Naive thymus-derived CD4-positive, alpha-beta T cell (primary cell): ENCODE measurements at regions of chr3 and their contacts with region 1.

Region 1: DNA sequence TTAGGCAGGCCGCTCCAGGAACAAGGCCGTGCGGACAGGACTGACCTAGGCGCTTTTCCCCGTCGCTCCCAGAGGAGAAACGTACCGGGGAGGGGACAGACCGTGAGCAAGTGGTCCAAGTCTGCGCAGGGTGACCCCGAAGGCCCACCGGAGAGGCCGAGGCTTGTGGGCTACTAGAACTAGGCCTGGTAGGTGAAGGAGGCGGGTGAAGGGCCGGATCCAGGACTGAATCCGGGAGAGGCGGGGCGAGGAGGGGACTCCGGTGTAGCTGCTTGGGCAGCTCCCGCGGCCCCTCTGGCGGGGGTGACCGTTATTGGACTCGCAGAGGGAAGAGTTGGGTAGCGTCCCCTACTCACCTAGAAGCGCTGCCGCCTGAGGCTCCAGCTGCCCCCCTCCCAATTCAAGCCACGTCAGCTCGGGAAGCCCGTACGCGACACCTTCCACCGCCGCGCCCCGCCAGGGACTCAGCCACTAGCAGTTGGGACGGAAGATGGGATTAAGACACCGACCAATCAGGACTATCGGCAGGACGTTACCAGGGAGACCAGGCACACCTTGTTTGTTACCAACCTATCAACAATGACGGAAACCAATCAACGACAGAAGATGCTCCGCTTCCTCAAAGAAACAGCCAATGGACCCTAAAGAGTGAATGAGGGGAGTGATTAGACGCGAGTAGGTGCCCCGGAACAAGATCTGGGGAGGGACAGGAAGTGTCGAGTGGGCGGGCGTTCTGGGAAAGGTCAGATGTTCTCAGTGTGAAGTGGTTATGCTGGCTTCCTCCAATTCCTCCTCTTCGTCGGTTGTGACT is at the start of gene GOLGB1:
- DNase-seq: peak; percentile 79 to 98 (median 96)
- ATAC-seq: peak; percentile 96
- H3K4me3 ChIP-seq: peak within 1 kb of the TSS; percentile 78
- H3K4me3 Mint-ChIP-seq: peak within 1 kb of the TSS in 3 of 10 donors; percentile 5 to 58 (median 39)
- H3K27ac ChIP-seq: peak within 1 kb of the TSS; percentile 96
- H3K27ac Mint-ChIP-seq: peak within 1 kb of the TSS in 2 of 9 donors; percentile 19 to 36
- H3K4me1 ChIP-seq: peaks cover 4 to 11% of the 10 kb centered on the region in 2 donors
- H3K4me1 Mint-ChIP-seq: peaks cover 5 to 18% (median 10%) of the 10 kb centered on the region in 7 donors
- H3K27me3 ChIP-seq: no peaks in the 10 kb centered on the region
- H3K27me3 Mint-ChIP-seq: peaks cover 0 to 24% (median 14%) of the 10 kb centered on the region in 5 donors
- total RNA-seq, gene GOLGB1: 29.5 to 49.7 (median 44.5) TPM

Region 2: DNA sequence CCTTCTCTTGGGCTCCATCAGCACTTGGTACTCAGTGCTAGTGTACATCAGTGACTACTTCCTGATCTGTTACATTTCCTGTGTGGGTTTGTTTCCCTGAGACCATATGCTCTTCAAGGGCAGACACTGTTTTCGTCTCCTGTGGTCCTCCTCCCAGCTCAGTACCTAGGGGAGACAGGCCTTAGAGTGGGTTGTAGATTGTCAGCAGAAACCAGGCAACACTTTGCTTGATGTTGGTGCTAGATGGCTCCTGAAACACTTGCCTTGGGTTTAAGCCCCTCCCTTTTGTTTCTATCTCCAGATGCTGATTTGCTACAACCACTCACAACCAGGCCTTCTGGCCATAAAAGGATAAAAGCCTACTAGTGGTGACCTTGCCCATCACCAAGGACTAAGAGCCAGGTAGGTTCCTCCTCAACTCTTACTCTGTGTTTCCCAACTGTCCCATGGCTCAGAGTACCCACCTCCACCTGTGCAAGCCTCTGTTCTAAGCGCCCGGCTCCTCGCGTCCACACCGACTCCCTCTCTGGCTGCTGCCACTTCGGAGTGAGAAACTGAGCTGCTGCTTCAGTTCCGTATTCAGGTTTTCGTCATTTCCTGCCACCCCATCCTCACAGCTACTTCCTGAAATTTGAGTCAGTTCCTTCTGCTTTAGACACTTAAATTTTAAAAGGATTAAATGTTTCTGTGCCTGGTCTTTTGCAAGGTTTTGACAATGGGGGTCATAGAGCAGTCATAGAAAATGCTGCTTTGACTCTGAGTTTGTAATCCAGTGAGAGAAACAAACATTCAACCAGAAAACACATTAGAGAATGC is 88.9 kb before region 1 on chr3 and contains the start of gene HCLS1:
- CTCF ChIA-PET with region 1: no interaction called
- POLR2A ChIA-PET with region 1: interaction called, 17 read pairs
- intact Hi-C with region 1: loop called (anchors 1 kb)
- DNase-seq: peak; percentile 60 to 87 (median 79)
- ATAC-seq: peak; percentile 87
- H3K4me3 ChIP-seq: peak within 1 kb of the TSS; percentile 90
- H3K4me3 Mint-ChIP-seq: peak within 1 kb of the TSS; percentile 82 to 99 (median 95)
- H3K27ac ChIP-seq: peak within 1 kb of the TSS; percentile 90
- H3K27ac Mint-ChIP-seq: peak within 1 kb of the TSS; percentile 96 to 100 (median 99)
- H3K4me1 ChIP-seq: peaks cover 34 to 41% of the 10 kb centered on the region in 2 donors
- H3K4me1 Mint-ChIP-seq: peaks cover 41 to 68% (median 57%) of the 10 kb centered on the region in 7 donors
- H3K27me3 ChIP-seq: no peaks in the 10 kb centered on the region
- H3K27me3 Mint-ChIP-seq: no peaks in the 10 kb centered on the region
- total RNA-seq, gene HCLS1: 275 to 357 (median 311) TPM

Region 3: DNA sequence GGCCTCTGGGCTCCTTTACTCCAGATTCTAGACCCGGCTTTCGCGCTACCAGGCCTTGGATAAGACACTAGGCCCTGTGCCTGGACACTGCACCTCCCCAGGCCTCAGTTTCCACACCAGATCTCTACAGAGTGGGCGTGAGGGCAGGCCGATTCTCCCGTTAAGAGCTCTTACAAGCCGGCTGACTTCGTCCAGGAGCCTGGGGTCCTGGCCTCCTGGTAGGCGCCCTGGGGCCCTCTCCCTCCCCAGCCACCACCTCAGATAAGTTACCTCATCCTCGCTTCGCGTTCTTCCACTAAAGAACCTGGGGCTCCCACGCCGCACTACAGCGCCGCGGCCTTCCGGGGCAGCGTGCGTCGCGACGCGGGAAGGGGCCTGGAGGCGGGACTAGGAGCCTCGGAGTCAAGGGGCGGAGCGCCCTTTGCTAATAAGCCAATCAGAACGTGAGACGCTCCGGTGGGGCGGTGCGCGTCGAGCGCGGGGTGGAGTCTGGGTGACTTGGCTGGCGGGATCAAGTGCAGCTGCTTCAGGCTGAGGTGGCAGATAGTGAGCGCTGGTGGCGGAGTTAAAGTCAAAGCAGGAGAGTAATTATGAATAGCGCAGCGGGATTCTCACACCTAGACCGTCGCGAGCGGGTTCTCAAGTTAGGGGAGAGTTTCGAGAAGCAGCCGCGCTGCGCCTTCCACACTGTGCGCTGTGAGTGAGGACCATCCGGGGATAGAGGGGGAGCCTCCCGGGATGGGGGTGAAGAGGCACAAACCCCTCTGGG is 85.4 kb after region 1 on chr3 and contains the starts of genes EAF2 and IQCB1:
- CTCF ChIA-PET with region 1: no interaction called
- POLR2A ChIA-PET with region 1: interaction called, 9 read pairs
- intact Hi-C with region 1: loop called (anchors 1 kb)
- DNase-seq: peak; percentile 93 to 98 (median 97)
- ATAC-seq: peak; percentile 99
- H3K4me3 ChIP-seq: peak within 1 kb of the TSS; percentile 85
- H3K4me3 Mint-ChIP-seq: peak within 1 kb of the TSS; percentile 83 to 97 (median 93)
- H3K27ac ChIP-seq: peak within 1 kb of the TSS; percentile 89
- H3K27ac Mint-ChIP-seq: peak within 1 kb of the TSS; percentile 78 to 98 (median 92)
- H3K4me1 ChIP-seq: peaks cover 10 to 14% of the 10 kb centered on the region in 2 donors
- H3K4me1 Mint-ChIP-seq: peaks cover 32 to 65% (median 58%) of the 10 kb centered on the region in 7 donors
- H3K27me3 ChIP-seq: no peaks in the 10 kb centered on the region
- H3K27me3 Mint-ChIP-seq: no peaks in the 10 kb centered on the region
- total RNA-seq, gene EAF2: 6.4 to 16.1 (median 7.5) TPM
- total RNA-seq, gene IQCB1: 32.6 to 45.6 (median 35.8) TPM

Region 4: GRCh38 chr3:122514123-122515019 is 764.9 kb after region 1 on chr3 and contains the start of gene KPNA1:
- CTCF ChIA-PET with region 1: no interaction called
- POLR2A ChIA-PET with region 1: no interaction called
- intact Hi-C with region 1: loop called in 1 of 2 experiments (anchors 1 kb)
- DNase-seq: peak; percentile 81 to 92 (median 90)
- ATAC-seq: peak; percentile 92
- H3K4me3 ChIP-seq: peak within 1 kb of the TSS; percentile 80
- H3K4me3 Mint-ChIP-seq: peak within 1 kb of the TSS; percentile 77 to 100 (median 92)
- H3K27ac ChIP-seq: peak within 1 kb of the TSS; percentile 100
- H3K27ac Mint-ChIP-seq: peak within 1 kb of the TSS; percentile 78 to 97 (median 91)
- H3K4me1 ChIP-seq: peaks cover 6 to 21% of the 10 kb centered on the region in 2 donors
- H3K4me1 Mint-ChIP-seq: peaks cover 35 to 52% (median 46%) of the 10 kb centered on the region in 7 donors
- H3K27me3 ChIP-seq: no peaks in the 10 kb centered on the region
- H3K27me3 Mint-ChIP-seq: no peaks in the 10 kb centered on the region
- total RNA-seq, gene KPNA1: 50.6 to 70.2 (median 54.3) TPM

Region 5: GRCh38 chr3:123201566-123202427 is 1452.3 kb after region 1 on chr3 and contains the start of gene SEC22A:
- CTCF ChIA-PET with region 1: no interaction called
- POLR2A ChIA-PET with region 1: no interaction called
- intact Hi-C with region 1: loop called (anchors 1 kb)
- DNase-seq: peak; percentile 89 to 99 (median 97)
- ATAC-seq: peak; percentile 97
- H3K4me3 ChIP-seq: peak within 1 kb of the TSS; percentile 90
- H3K4me3 Mint-ChIP-seq: peak within 1 kb of the TSS; percentile 82 to 98 (median 92)
- H3K27ac ChIP-seq: peak within 1 kb of the TSS; percentile 99
- H3K27ac Mint-ChIP-seq: peak within 1 kb of the TSS; percentile 97 to 100 (median 99)
- H3K4me1 ChIP-seq: peaks cover 12% of the 10 kb centered on the region in 2 donors
- H3K4me1 Mint-ChIP-seq: peaks cover 13 to 41% (median 31%) of the 10 kb centered on the region in 7 donors
- H3K27me3 ChIP-seq: no peaks in the 10 kb centered on the region
- H3K27me3 Mint-ChIP-seq: peaks cover 0 to 9% (median 2%) of the 10 kb centered on the region in 5 donors
- total RNA-seq, gene SEC22A: 15.0 to 20.1 (median 17.1) TPM